ENCODE measurements at regions of chr5 and their contacts with region 1.

Region 1: GRCh38 chr5:144467792-144468191 is 297.1 kb downstream of the KCTD16 start:
- DNase-seq: peak in 1 of 2 experiments; percentile 56
- H3K4me3 ChIP-seq: no peak overlapping the region
- H3K27ac ChIP-seq: no peak overlapping the region
- H3K4me1 ChIP-seq: peaks cover 0 to 3% (median 0%) of the 10 kb centered on the region in 4 experiments; a peak in 1 of 7 replicates
- H3K27me3 ChIP-seq: no peaks in the 10 kb centered on the region
- CTCF ChIP-seq: peak in 2 of 3 experiments; percentile 61 to 79; a peak in 3 of 4 replicates
- EP300 ChIP-seq: no peak
- POLR2A ChIP-seq: no peak
- RAD21 ChIP-seq: peak; percentile 69 to 79

Region 2: GRCh38 chr5:144219869-144220268 is 247.9 kb before region 1 on chr5:
- CTCF ChIA-PET with region 1: no interaction called
- POLR2A ChIA-PET with region 1: no interaction called
- DNase-seq: no peak
- H3K4me3 ChIP-seq: no peak overlapping the region
- H3K27ac ChIP-seq: no peak overlapping the region
- H3K4me1 ChIP-seq: no peaks in the 10 kb centered on the region
- H3K27me3 ChIP-seq: no peaks in the 10 kb centered on the region
- CTCF ChIP-seq: no peak
- EP300 ChIP-seq: no peak
- POLR2A ChIP-seq: no peak
- RAD21 ChIP-seq: no peak

Region 3: GRCh38 chr5:144448457-144448856 is 19.3 kb before region 1 on chr5:
- CTCF ChIA-PET with region 1: no interaction called
- POLR2A ChIA-PET with region 1: no interaction called
- DNase-seq: no peak
- H3K4me3 ChIP-seq: no peak overlapping the region
- H3K27ac ChIP-seq: no peak overlapping the region
- H3K4me1 ChIP-seq: no peaks in the 10 kb centered on the region
- H3K27me3 ChIP-seq: no peaks in the 10 kb centered on the region
- CTCF ChIP-seq: no peak
- EP300 ChIP-seq: no peak
- POLR2A ChIP-seq: no peak
- RAD21 ChIP-seq: no peak

Region 4: GRCh38 chr5:144531188-144531587 is 63.4 kb after region 1 on chr5:
- CTCF ChIA-PET with region 1: no interaction called
- POLR2A ChIA-PET with region 1: no interaction called
- DNase-seq: no peak
- H3K4me3 ChIP-seq: no peak overlapping the region
- H3K27ac ChIP-seq: no peak overlapping the region
- H3K4me1 ChIP-seq: no peaks in the 10 kb centered on the region
- H3K27me3 ChIP-seq: no peaks in the 10 kb centered on the region
- CTCF ChIP-seq: no peak
- EP300 ChIP-seq: no peak
- POLR2A ChIP-seq: no peak
- RAD21 ChIP-seq: no peak

Region 5: GRCh38 chr5:145237843-145238242 is 770.1 kb after region 1 on chr5:
- CTCF ChIA-PET with region 1: interaction called, 10 read pairs
- POLR2A ChIA-PET with region 1: no interaction called
- DNase-seq: peak; percentile 46 to 68
- H3K4me3 ChIP-seq: no peak overlapping the region
- H3K27ac ChIP-seq: no peak overlapping the region
- H3K4me1 ChIP-seq: peaks cover 0 to 10% (median 0%) of the 10 kb centered on the region in 4 experiments; a peak in 2 of 7 replicates
- H3K27me3 ChIP-seq: no peaks in the 10 kb centered on the region
- CTCF ChIP-seq: peak in 2 of 3 experiments; percentile 69 to 81; a peak in 3 of 4 replicates
- EP300 ChIP-seq: no peak
- POLR2A ChIP-seq: no peak
- RAD21 ChIP-seq: peak; percentile 94 to 96